ENCODE measurements at regions of chr9 and their contacts with region 1.

Region 1: GRCh38 chr9:32543047-32543446 is 9.1 kb upstream of the SMIM27 start:
- DNase-seq: no peak
- CTCF ChIP-seq: no peak

Region 2: GRCh38 chr9:32490601-32491000 is 52.4 kb before region 1 on chr9:
- CTCF ChIA-PET with region 1: no interaction called
- POLR2A ChIA-PET with region 1: no interaction called
- DNase-seq: no peak
- CTCF ChIP-seq: no peak

Region 3: DNA sequence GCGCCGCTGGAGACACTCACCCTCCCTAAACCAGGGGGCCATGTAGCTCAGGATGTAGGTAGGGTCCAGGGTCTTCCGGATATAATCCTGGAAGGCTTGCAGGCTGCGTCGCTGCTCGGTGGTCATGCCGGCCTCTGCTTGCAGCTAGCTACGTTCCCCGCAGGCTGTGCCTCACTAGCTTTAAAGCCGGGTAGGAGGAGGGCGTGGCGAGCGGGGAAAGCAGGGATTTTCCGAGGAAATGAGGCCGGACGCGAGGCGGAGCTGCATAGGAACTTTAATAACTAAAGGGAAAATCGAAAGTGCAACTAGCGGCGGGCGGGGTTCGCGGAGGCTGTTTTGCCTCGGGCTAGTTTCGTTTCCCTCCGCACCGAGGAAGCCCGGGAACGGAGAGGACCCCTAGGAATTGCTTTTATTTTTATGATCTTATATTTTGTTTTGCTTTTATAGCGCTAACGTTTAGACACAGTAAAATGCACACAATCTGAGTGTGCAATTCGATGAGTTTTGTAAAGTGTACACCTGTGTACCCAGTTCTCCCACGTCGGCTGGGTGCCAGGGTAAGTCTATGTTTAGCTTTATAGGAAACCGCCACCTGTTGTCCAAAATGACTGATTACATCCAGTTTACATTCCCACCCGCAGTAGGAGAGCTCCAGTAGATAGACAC is 16.9 kb before region 1 on chr9 and contains the start of gene RIGI:
- CTCF ChIA-PET with region 1: interaction called, 19 read pairs
- POLR2A ChIA-PET with region 1: no interaction called
- DNase-seq: peak; percentile 58
- CTCF ChIP-seq: peak; percentile 12

Measured in GM10248 (cell line).